Activated naive CD4-positive, alpha-beta T cell treated with anti-CD3 and anti-CD28 coated beads for 36 hours (primary cell): ENCODE measurements at regions of chr11 and their contacts with region 1.

Region 1: GRCh38 chr11:128884703-128885338 is 6.3 kb upstream of the KCNJ5 start:
- DNase-seq: peak; percentile 80
- H3K4me3 Mint-ChIP-seq: no peak overlapping the region
- H3K27ac Mint-ChIP-seq: no peak overlapping the region
- H3K4me1 Mint-ChIP-seq: no peaks in the 10 kb centered on the region
- H3K27me3 Mint-ChIP-seq: peaks cover 34% of the 10 kb centered on the region

Region 2: GRCh38 chr11:128559496-128560103 is 325.2 kb before region 1 on chr11:
- CTCF ChIA-PET with region 1: no interaction called
- intact Hi-C with region 1: no loop called
- DNase-seq: peak; percentile 85
- H3K4me3 Mint-ChIP-seq: no peak overlapping the region
- H3K27ac Mint-ChIP-seq: no peak overlapping the region
- H3K4me1 Mint-ChIP-seq: peaks cover 24% of the 10 kb centered on the region
- H3K27me3 Mint-ChIP-seq: no peaks in the 10 kb centered on the region

Region 3: GRCh38 chr11:128905345-128906184 is 20.7 kb after region 1 on chr11:
- CTCF ChIA-PET with region 1: interaction called, 114 read pairs
- intact Hi-C with region 1: loop called (anchors 1 kb)
- DNase-seq: peak; percentile 62
- H3K4me3 Mint-ChIP-seq: peak overlapping the region; percentile 69
- H3K27ac Mint-ChIP-seq: no peak overlapping the region
- H3K4me1 Mint-ChIP-seq: peaks cover 11% of the 10 kb centered on the region
- H3K27me3 Mint-ChIP-seq: peaks cover 38% of the 10 kb centered on the region

Region 4: GRCh38 chr11:128948589-128948988 is 63.8 kb after region 1 on chr11:
- CTCF ChIA-PET with region 1: interaction called, 175 read pairs
- intact Hi-C with region 1: loop called (anchors 2 kb)
- DNase-seq: peak; percentile 25
- H3K4me3 Mint-ChIP-seq: no peak overlapping the region
- H3K27ac Mint-ChIP-seq: no peak overlapping the region
- H3K4me1 Mint-ChIP-seq: no peaks in the 10 kb centered on the region
- H3K27me3 Mint-ChIP-seq: peaks cover 4% of the 10 kb centered on the region

Region 5: GRCh38 chr11:129117595-129118350 is 233.0 kb after region 1 on chr11:
- CTCF ChIA-PET with region 1: interaction called, 4 read pairs
- intact Hi-C with region 1: loop called (anchors 1 kb)
- DNase-seq: peak; percentile 64
- H3K4me3 Mint-ChIP-seq: no peak overlapping the region
- H3K27ac Mint-ChIP-seq: no peak overlapping the region
- H3K4me1 Mint-ChIP-seq: peaks cover 3% of the 10 kb centered on the region
- H3K27me3 Mint-ChIP-seq: no peaks in the 10 kb centered on the region

Region 6: GRCh38 chr11:129331871-129332274 is 447.1 kb after region 1 on chr11:
- CTCF ChIA-PET with region 1: no interaction called
- intact Hi-C with region 1: loop called (anchors 1 kb)
- DNase-seq: peak; percentile 85
- H3K4me3 Mint-ChIP-seq: no peak overlapping the region
- H3K27ac Mint-ChIP-seq: no peak overlapping the region
- H3K4me1 Mint-ChIP-seq: peaks cover 4% of the 10 kb centered on the region
- H3K27me3 Mint-ChIP-seq: no peaks in the 10 kb centered on the region

Region 7: GRCh38 chr11:129750349-129751292 is 865.8 kb after region 1 on chr11:
- CTCF ChIA-PET with region 1: no interaction called
- intact Hi-C with region 1: loop called (anchors 2 kb)
- DNase-seq: peak; percentile 82
- H3K4me3 Mint-ChIP-seq: peak overlapping the region; percentile 23
- H3K27ac Mint-ChIP-seq: no peak overlapping the region
- H3K4me1 Mint-ChIP-seq: peaks cover 2% of the 10 kb centered on the region
- H3K27me3 Mint-ChIP-seq: no peaks in the 10 kb centered on the region